ENCODE measurements at regions of chr21 and their contacts with region 1.

Region 1: GRCh38 chr21:37563641-37564340 is 197.2 kb downstream of the DYRK1A start:
- DNase-seq: peak; percentile 92
- H3K27ac ChIP-seq: peak overlapping the region; percentile 93
- CTCF ChIP-seq: 0 out of 2 replicates have a peak, but pooled peaks have one; percentile 7

Region 2: DNA sequence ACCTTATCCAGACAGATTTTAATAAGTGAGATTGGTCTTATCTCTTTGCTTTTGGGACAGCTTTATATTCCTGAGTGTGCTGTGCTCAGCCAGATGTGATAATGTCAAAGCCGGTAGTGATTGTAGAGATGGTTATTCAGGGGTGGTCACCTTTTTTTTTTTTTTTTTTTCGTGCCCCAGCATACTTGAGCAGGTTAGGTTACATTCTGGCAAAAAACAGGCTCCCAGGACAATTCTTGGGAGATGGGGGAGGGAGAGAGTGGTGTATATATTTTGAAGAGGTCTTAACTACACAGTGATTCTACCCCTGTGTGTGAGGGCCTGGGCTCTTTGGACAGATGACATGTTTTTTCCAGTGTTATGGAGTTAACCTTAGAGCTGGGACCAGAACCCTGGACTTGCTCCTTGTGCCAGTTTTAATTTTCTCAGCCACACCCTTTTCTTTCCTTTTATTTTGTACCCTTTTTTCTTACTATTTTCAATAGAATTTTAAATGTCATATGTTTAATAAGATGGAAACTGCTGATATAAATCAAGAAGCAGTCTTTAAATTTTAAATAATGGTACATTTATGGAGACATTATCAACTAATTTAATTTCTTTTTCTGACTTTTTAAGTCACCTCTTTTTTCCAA is 108.8 kb before region 1 on chr21:
- CTCF ChIA-PET with region 1: no interaction called
- POLR2A ChIA-PET with region 1: interaction called, 12 read pairs
- DNase-seq: no peak
- H3K27ac ChIP-seq: no peak overlapping the region
- CTCF ChIP-seq: no peak

Region 3: DNA sequence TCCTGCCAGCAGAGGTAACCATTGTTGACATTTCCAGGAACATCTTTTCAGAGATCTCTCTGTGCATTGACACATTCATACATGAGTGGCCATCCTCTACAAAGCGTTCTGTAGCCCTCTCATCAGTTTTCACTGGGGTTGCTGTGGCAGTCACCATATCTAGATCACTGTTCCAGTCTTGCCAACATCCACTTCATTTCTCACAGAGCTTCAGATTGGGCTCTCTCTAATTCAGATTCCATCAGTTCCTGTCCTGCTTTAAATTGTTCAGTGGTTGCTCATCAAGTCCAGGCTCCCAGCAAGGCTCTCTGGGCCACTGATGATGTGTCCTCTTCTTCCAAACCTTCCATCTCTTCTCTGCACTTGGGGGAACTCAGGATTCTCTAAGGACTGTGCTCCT is 178.7 kb after region 1 on chr21:
- CTCF ChIA-PET with region 1: no interaction called
- POLR2A ChIA-PET with region 1: no interaction called
- DNase-seq: no peak
- H3K27ac ChIP-seq: no peak overlapping the region
- CTCF ChIP-seq: no peak